OCI-LY7 (cell line): ENCODE measurements at regions of chr7 and their contacts with region 1.

Region 1: DNA sequence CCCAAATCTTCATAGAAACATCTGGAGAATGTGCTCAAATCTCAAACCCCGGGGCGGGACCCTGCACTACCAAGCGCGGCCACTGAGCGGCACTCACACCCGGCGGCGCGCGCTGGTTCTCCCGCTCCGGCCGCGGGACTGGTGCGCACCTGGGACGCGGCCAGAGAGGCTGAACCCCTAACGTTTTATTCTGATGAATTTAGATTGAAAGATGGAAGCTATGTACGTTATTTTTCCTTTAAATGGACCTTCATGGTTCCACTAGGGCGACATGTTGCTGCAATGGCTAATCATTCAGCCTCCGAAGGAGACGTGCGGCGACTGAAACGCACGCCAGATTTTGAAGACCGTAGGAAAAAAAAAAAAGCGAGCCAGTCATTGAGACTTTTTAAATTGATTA is 107.0 kb upstream of the INSIG1 start:
- DNase-seq: peak; percentile 44
- H3K4me3 ChIP-seq: no peak overlapping the region
- H3K27ac ChIP-seq: no peak overlapping the region
- H3K4me1 ChIP-seq: no peaks in the 10 kb centered on the region
- CTCF ChIP-seq: peak; percentile 86

Region 2: GRCh38 chr7:155244675-155245074 is 54.0 kb after region 1 on chr7:
- CTCF ChIA-PET with region 1: no interaction called
- POLR2A ChIA-PET with region 1: no interaction called
- intact Hi-C with region 1: no loop called
- DNase-seq: no peak
- H3K4me3 ChIP-seq: no peak overlapping the region
- H3K27ac ChIP-seq: no peak overlapping the region
- H3K4me1 ChIP-seq: no peaks in the 10 kb centered on the region
- CTCF ChIP-seq: no peak

Region 3: GRCh38 chr7:155257482-155258225 is 67.0 kb after region 1 on chr7:
- CTCF ChIA-PET with region 1: no interaction called
- POLR2A ChIA-PET with region 1: no interaction called
- intact Hi-C with region 1: loop called (anchors 5 kb)
- DNase-seq: no peak
- H3K4me3 ChIP-seq: no peak overlapping the region
- H3K27ac ChIP-seq: no peak overlapping the region
- H3K4me1 ChIP-seq: no peaks in the 10 kb centered on the region
- CTCF ChIP-seq: no peak

Region 4: GRCh38 chr7:155344600-155345433 is 154.1 kb after region 1 on chr7:
- CTCF ChIA-PET with region 1: no interaction called
- POLR2A ChIA-PET with region 1: no interaction called
- intact Hi-C with region 1: loop called (anchors 1 kb)
- DNase-seq: peak; percentile 69
- H3K4me3 ChIP-seq: peak overlapping the region; percentile 69
- H3K27ac ChIP-seq: no peak overlapping the region
- H3K4me1 ChIP-seq: no peaks in the 10 kb centered on the region
- CTCF ChIP-seq: peak; percentile 85